ENCODE measurements at regions of chr1 and their contacts with region 1.

Region 1: DNA sequence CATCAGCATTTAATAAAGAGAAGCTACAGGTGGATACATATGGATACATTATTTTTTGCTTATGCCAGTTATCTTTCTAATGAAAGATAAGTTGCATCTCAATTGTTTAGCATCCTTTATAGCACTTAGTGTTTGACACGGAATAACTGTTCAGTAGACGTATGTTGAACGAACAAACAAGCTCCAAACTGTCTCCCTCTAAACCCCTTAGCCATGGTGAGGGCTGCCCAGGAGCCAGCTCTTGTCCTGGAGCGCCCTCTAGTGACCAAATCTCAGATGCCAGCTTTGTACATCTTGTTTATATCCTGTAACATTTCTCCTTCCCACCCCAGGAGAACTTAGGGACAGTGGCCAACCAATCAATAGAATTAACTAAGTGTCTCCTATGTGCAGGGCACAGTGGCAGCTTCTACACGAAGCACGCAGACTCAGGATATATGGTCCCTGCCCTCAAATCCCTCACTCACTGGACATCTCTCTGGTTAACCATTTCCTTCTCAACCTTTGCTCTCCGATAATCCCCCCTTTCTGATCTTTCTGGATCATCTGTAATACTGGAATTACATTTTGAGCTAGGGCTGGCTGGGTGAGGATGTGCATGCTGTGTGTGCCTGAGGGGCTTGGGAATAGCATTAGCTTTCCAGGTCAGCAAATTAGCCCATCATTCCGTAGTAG is 22.9 kb downstream of the KCNA10 start:
- DNase-seq: peak; percentile 62 to 73 (median 69)
- H3K4me3 ChIP-seq: no peak overlapping the region
- H3K4me3 Mint-ChIP-seq: no peak overlapping the region
- H3K27ac ChIP-seq: no peak overlapping the region
- H3K27ac Mint-ChIP-seq: no peak overlapping the region
- H3K4me1 ChIP-seq: no peaks in the 10 kb centered on the region
- H3K4me1 Mint-ChIP-seq: no peaks in the 10 kb centered on the region
- H3K27me3 ChIP-seq: no peaks in the 10 kb centered on the region
- H3K27me3 Mint-ChIP-seq: no peaks in the 10 kb centered on the region

Region 2: DNA sequence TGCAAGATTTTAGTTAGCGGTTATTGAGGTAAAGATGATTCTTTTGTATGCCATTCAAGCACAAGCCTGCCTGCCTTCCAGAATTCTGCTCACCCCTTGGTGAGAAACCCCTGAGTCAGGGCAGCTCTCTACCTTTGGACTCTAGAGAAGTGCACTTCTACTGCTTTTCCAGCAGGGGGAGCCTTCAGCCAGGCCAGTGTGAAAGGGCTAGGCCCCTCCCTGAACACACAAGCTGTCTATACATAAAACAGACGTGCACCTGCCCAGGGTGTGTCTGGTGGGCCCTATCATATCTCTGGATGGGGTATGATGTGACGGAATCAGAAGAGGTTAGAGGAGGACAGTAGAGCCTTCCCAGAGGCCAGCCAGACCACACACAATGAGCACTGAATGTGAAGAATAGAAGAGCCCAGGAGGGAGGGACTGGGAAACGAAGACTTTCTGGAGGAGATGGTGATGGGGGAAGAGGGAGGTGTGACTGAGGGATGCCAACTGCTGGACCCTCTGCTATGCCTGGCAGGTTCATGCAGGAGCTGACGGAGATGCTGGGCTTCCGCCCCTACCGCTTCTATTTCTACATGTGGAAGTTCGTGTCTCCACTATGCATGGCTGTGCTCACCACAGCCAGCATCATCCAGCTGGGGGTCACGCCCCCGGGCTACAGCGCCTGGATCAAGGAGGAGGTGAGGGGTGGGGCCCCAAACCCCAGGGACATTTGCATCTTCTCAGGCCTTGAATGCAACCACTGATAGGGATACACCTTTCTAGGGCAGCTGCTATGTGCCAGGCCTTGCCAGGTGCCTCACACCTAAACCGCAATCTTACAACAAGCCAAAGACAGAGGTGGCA is 298.9 kb before region 1 on chr1:
- CTCF ChIA-PET with region 1: interaction called, 52 read pairs
- POLR2A ChIA-PET with region 1: no interaction called
- intact Hi-C with region 1: no loop called
- DNase-seq: peak; percentile 53 to 65 (median 63)
- H3K4me3 ChIP-seq: no peak overlapping the region
- H3K4me3 Mint-ChIP-seq: no peak overlapping the region
- H3K27ac ChIP-seq: no peak overlapping the region
- H3K27ac Mint-ChIP-seq: peak overlapping the region in 2 of 7 donors; percentile 56 to 80
- H3K4me1 ChIP-seq: no peaks in the 10 kb centered on the region
- H3K4me1 Mint-ChIP-seq: peaks cover 0 to 3% (median under 1%) of the 10 kb centered on the region in 4 donors
- H3K27me3 ChIP-seq: no peaks in the 10 kb centered on the region
- H3K27me3 Mint-ChIP-seq: no peaks in the 10 kb centered on the region

Region 3: GRCh38 chr1:110209715-110210603 is 286.1 kb before region 1 on chr1 and contains the start of gene KCNC4:
- CTCF ChIA-PET with region 1: interaction called, 52 read pairs
- POLR2A ChIA-PET with region 1: interaction called, 5 read pairs
- intact Hi-C with region 1: loop called (anchors 1 kb)
- DNase-seq: peak; percentile 91 to 95 (median 94)
- H3K4me3 ChIP-seq: peak within 1 kb of the TSS; percentile 36 to 68
- H3K4me3 Mint-ChIP-seq: peak within 1 kb of the TSS; percentile 87 to 95 (median 89)
- H3K27ac ChIP-seq: peak within 1 kb of the TSS; percentile 81
- H3K27ac Mint-ChIP-seq: peak within 1 kb of the TSS; percentile 89 to 98 (median 97)
- H3K4me1 ChIP-seq: peaks cover 44% of the 10 kb centered on the region
- H3K4me1 Mint-ChIP-seq: peaks cover 32 to 64% (median 45%) of the 10 kb centered on the region in 4 donors
- H3K27me3 ChIP-seq: no peaks in the 10 kb centered on the region
- H3K27me3 Mint-ChIP-seq: no peaks in the 10 kb centered on the region
- total RNA-seq, gene KCNC4: 11.9 to 13.4 TPM

Region 4: DNA sequence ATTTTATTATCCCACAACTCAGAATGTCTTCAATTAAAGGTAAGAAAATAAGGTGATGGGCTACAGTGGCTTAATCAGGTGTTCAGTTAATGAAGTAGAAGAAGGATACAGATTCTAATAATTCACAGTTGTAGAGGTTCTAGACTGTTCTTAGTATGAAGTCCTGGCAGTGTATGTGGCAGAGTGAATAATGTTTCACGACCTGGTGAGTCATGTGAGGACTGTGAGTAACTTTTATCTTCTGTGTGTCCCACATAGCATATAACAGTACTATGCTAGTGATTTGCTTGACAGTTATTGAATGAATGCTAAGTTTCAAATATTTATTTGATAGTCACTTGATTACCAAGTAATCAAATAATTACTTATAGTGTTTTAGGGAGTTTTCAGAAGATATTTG is 125.2 kb before region 1 on chr1:
- CTCF ChIA-PET with region 1: no interaction called
- POLR2A ChIA-PET with region 1: no interaction called
- intact Hi-C with region 1: no loop called
- DNase-seq: no peak
- H3K4me3 ChIP-seq: no peak overlapping the region
- H3K4me3 Mint-ChIP-seq: no peak overlapping the region
- H3K27ac ChIP-seq: no peak overlapping the region
- H3K27ac Mint-ChIP-seq: peak overlapping the region in 3 of 7 donors; percentile 10 to 68 (median 11)
- H3K4me1 ChIP-seq: peaks cover 4% of the 10 kb centered on the region
- H3K4me1 Mint-ChIP-seq: peaks cover under 1 to 4% (median 3%) of the 10 kb centered on the region in 4 donors
- H3K27me3 ChIP-seq: no peaks in the 10 kb centered on the region
- H3K27me3 Mint-ChIP-seq: no peaks in the 10 kb centered on the region

Region 5: DNA sequence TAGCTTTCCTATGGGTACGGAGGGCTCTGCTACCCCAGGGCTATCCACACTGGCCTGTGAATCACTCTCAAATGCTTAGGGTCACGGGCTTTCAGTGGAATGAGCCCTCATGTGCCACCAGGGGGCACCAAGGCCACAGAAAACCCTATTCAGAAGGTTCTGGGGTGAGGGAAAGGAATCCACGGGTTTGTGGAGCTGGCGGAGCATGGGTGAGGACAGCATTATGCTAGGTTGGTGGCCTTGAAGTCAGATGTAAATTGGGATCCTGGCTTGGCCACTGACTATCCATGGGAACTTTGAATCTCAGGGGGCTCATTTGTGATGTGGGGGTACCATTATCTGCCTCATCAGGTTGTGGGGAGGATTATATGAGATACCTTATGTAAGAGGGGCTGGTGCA is 83.5 kb before region 1 on chr1:
- CTCF ChIA-PET with region 1: interaction called, 45 read pairs
- POLR2A ChIA-PET with region 1: interaction called, 4 read pairs
- intact Hi-C with region 1: loop called (anchors 1 kb)
- DNase-seq: peak; percentile 52 to 63 (median 56)
- H3K4me3 ChIP-seq: no peak overlapping the region
- H3K4me3 Mint-ChIP-seq: no peak overlapping the region
- H3K27ac ChIP-seq: no peak overlapping the region
- H3K27ac Mint-ChIP-seq: peak overlapping the region in 4 of 7 donors; percentile 5 to 84 (median 49)
- H3K4me1 ChIP-seq: peaks cover 15% of the 10 kb centered on the region
- H3K4me1 Mint-ChIP-seq: peaks cover 10 to 19% (median 13%) of the 10 kb centered on the region in 4 donors
- H3K27me3 ChIP-seq: no peaks in the 10 kb centered on the region
- H3K27me3 Mint-ChIP-seq: no peaks in the 10 kb centered on the region

Region 6: DNA sequence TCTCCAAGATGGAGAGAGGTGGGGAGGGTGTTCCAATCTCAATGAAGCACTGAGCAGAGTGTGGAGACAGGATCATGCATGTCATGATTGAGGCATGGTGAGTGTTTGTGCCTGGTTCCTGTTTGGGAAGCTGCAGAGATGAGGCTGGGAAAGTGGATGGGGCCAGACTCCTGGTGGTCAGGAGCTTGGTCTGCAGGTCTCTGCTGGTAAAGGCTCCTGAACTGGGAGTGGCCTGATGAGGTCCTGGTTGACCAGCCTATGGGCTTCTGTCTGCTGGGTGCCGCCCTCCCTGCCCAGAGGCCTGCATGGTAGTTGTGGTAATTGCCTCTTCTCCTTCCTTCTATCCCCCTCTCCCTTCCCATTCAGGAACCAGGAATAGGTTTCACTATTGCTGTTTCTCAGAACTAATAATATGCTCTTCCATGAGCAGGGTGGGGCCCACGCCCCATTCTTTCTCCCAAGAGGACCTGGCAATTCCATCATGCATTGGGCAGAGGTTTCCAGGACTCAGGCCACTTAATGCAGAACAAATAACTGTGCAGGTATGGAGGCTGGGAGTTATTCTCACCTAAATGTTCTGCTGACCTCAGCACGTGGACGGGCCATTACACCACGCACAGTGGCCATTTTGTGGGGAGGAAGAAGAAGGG is 20.6 kb before region 1 on chr1:
- CTCF ChIA-PET with region 1: interaction called, 10 read pairs
- POLR2A ChIA-PET with region 1: no interaction called
- intact Hi-C with region 1: no loop called
- DNase-seq: no peak
- H3K4me3 ChIP-seq: no peak overlapping the region
- H3K4me3 Mint-ChIP-seq: no peak overlapping the region
- H3K27ac ChIP-seq: no peak overlapping the region
- H3K27ac Mint-ChIP-seq: no peak overlapping the region
- H3K4me1 ChIP-seq: no peaks in the 10 kb centered on the region
- H3K4me1 Mint-ChIP-seq: no peaks in the 10 kb centered on the region
- H3K27me3 ChIP-seq: peaks cover 3% of the 10 kb centered on the region
- H3K27me3 Mint-ChIP-seq: peaks cover 6 to 8% of the 10 kb centered on the region in 2 donors

Region 7: GRCh38 chr1:110508038-110508940 is 12.2 kb after region 1 on chr1:
- CTCF ChIA-PET with region 1: interaction called, 15 read pairs
- POLR2A ChIA-PET with region 1: no interaction called
- intact Hi-C with region 1: no loop called
- DNase-seq: no peak
- H3K4me3 ChIP-seq: no peak overlapping the region
- H3K4me3 Mint-ChIP-seq: no peak overlapping the region
- H3K27ac ChIP-seq: no peak overlapping the region
- H3K27ac Mint-ChIP-seq: no peak overlapping the region
- H3K4me1 ChIP-seq: no peaks in the 10 kb centered on the region
- H3K4me1 Mint-ChIP-seq: no peaks in the 10 kb centered on the region
- H3K27me3 ChIP-seq: no peaks in the 10 kb centered on the region
- H3K27me3 Mint-ChIP-seq: peaks cover 0 to 5% of the 10 kb centered on the region in 2 donors

Region 8: GRCh38 chr1:110588991-110589390 is 92.9 kb after region 1 on chr1:
- CTCF ChIA-PET with region 1: no interaction called
- POLR2A ChIA-PET with region 1: no interaction called
- intact Hi-C with region 1: no loop called
- DNase-seq: no peak
- H3K4me3 ChIP-seq: no peak overlapping the region
- H3K4me3 Mint-ChIP-seq: no peak overlapping the region
- H3K27ac ChIP-seq: no peak overlapping the region
- H3K27ac Mint-ChIP-seq: no peak overlapping the region
- H3K4me1 ChIP-seq: no peaks in the 10 kb centered on the region
- H3K4me1 Mint-ChIP-seq: peaks cover 0 to 3% (median 1%) of the 10 kb centered on the region in 4 donors
- H3K27me3 ChIP-seq: no peaks in the 10 kb centered on the region
- H3K27me3 Mint-ChIP-seq: peaks cover 6 to 8% of the 10 kb centered on the region in 2 donors

Measured in CD4-positive, alpha-beta memory T cell (primary cell).